ENCODE measurements at regions of chr2 and their contacts with region 1.

Region 1: GRCh38 chr2:197168705-197169104 is 141.9 kb downstream of the ANKRD44 start:
- DNase-seq: peak; percentile 6 to 36
- ATAC-seq: peak; percentile 60
- H3K4me3 ChIP-seq: no peak overlapping the region
- H3K27ac ChIP-seq: no peak overlapping the region
- H3K4me1 ChIP-seq: peaks cover 0 to 9% of the 10 kb centered on the region in 2 donors
- H3K27me3 ChIP-seq: no peaks in the 10 kb centered on the region
- CTCF ChIP-seq: peak; percentile 7 to 45 (median 31)
- POLR2A ChIP-seq: no peak

Region 2: GRCh38 chr2:197011799-197012641 is 156.7 kb before region 1 on chr2:
- in situ Hi-C with region 1: no loop called
- intact Hi-C with region 1: loop called (anchors 1 kb)
- DNase-seq: no peak
- ATAC-seq: peak; percentile 56 to 75
- H3K4me3 ChIP-seq: no peak overlapping the region
- H3K27ac ChIP-seq: no peak overlapping the region
- H3K4me1 ChIP-seq: peaks cover 0 to 3% of the 10 kb centered on the region in 2 donors
- H3K27me3 ChIP-seq: no peaks in the 10 kb centered on the region
- CTCF ChIP-seq: peak; percentile 58 to 77 (median 64)
- POLR2A ChIP-seq: no peak

Measured in gastrocnemius medialis (tissue), 4 donors.